ENCODE measurements at regions of chr10 and their contacts with region 1.

Region 1: GRCh38 chr10:27568196-27569175 is 64.4 kb downstream of the RAB18 start:
- DNase-seq: no peak
- H3K4me3 Mint-ChIP-seq: no peak overlapping the region
- H3K27ac Mint-ChIP-seq: peak overlapping the region; percentile 58
- H3K4me1 Mint-ChIP-seq: peaks cover 38% of the 10 kb centered on the region
- H3K27me3 Mint-ChIP-seq: no peaks in the 10 kb centered on the region

Region 2: GRCh38 chr10:26997610-26998009 is 570.9 kb before region 1 on chr10:
- CTCF ChIA-PET with region 1: no interaction called
- POLR2A ChIA-PET with region 1: interaction called, 16 read pairs
- DNase-seq: peak; percentile 8
- H3K4me3 Mint-ChIP-seq: no peak overlapping the region
- H3K27ac Mint-ChIP-seq: peak overlapping the region; percentile 42
- H3K4me1 Mint-ChIP-seq: peaks cover 12% of the 10 kb centered on the region
- H3K27me3 Mint-ChIP-seq: no peaks in the 10 kb centered on the region

Region 3: DNA sequence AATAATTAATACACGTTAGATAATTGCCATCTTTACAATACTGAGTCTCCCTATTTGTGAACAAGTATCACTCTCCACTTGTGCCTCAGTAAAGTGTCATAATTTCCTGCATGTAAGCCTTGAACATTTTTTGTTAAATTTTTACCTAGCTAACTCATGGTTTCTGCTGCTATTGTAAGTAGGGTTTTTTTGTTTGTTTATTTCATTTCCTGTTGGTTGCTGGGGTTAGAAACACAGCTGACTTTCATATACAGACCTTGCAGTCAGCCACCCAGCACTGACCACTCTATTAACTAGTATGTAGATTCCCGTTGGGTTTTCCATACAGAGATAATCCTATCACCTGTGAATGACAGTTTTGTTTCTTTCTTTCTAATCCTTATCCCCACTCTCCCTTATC is 601.0 kb after region 1 on chr10:
- CTCF ChIA-PET with region 1: no interaction called
- POLR2A ChIA-PET with region 1: interaction called, 11 read pairs
- DNase-seq: no peak
- H3K4me3 Mint-ChIP-seq: no peak overlapping the region
- H3K27ac Mint-ChIP-seq: no peak overlapping the region
- H3K4me1 Mint-ChIP-seq: peaks cover 4% of the 10 kb centered on the region
- H3K27me3 Mint-ChIP-seq: no peaks in the 10 kb centered on the region

Measured in activated CD4-positive, alpha-beta T cell treated with anti-CD3 and anti-CD28 coated beads, Interleukin-2, amount 10 ng/mL, durations not matched to agents 7 days and 5 days (primary cell).